ENCODE measurements at regions of chr1 and their contacts with region 1.

Region 1: DNA sequence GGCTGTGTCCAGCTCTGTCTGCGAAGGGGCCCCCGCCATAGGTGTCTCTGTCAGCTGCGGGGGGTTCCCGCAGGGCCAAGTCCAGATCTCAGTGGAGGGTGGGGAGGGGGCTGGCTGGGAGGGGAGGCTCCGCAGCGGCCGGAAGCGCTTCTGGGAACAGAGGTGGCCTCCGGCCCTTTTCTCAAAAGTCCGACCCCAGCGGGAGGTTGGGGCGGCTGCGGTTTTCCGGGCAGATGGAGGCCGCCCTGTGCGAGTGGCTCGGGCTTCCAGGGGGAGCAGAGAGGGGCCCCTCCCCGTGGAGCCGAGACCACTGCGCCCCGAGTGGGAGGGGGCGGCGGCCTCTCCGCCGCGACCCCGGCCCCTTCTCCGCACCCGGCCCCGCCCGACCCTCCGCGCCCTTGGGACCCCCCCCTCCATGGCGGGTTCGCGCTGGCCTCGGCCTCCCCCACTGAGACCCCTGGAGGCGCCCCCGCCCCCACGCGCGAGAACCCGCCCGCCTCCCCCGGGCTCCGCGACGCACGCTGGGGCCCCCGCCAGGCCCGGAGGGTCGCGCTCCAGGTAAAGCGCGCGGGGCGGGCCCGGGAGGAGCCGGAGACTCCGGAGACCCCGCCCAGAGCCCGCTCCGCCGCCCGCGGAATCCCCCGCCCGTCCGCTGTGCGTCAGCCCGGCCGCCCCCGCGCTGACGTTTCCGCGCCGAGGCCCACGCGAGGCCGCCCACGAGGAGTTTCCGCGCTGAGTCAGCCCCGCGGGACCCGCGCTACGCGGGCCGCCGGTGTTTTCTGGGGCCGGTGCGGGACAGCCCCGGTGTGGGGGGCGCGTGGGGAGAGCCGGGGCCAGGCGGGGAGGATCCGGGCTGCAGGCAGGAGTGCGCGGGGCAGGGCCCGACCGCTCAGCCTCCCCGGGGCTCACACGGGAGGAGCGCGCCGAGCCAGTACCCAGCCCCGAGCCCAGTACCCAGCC is 5.3 kb downstream of the TNFRSF18 start:
- DNase-seq: peak; percentile 91
- H3K4me3 Mint-ChIP-seq: peak overlapping the region; percentile 59
- H3K27ac Mint-ChIP-seq: peak overlapping the region; percentile 83
- H3K4me1 Mint-ChIP-seq: peaks cover 12% of the 10 kb centered on the region
- H3K27me3 Mint-ChIP-seq: no peaks in the 10 kb centered on the region

Region 2: GRCh38 chr1:1137256-1138045 is 63.7 kb before region 1 on chr1:
- CTCF ChIA-PET with region 1: no interaction called
- intact Hi-C with region 1: loop called (anchors 2 kb)
- DNase-seq: peak; percentile 82
- H3K4me3 Mint-ChIP-seq: peak overlapping the region; percentile 43
- H3K27ac Mint-ChIP-seq: peak overlapping the region; percentile 75
- H3K4me1 Mint-ChIP-seq: peaks cover 12% of the 10 kb centered on the region
- H3K27me3 Mint-ChIP-seq: no peaks in the 10 kb centered on the region

Region 3: DNA sequence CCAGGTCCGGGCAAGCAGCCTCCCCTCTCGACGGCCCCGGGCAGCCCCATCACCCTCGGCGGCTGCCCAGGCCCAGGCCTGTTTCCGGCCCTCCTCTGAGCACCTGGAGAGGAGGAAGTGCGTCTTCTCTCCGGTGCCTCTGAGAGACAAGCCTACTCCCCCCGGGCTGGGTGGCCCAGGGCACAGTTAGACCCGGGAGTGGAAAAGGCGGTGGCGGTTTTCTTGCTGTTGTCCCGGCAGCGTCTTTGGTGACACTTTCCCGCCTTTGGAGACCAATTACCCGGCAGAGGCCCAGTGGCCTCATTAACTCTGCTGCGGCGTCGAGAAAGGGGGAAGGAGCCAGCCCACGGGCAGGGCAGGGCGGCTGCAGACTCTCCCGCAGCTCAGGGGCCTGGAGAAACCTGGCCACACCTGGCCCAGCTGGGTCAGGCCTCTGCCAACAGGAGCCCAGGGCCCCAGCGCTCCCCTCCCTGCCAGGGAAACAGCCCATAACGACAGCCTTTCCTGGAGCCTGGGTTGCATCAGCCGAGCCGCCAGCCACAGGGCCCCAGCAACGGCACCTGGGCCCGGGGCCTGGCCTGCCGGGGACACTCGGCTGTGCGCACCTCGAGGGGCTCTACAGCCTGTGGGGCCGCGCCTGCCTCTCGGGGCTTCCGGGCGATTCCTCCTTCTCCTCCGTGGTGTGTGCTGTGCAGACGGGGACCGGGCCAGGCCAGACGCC is 56.8 kb before region 1 on chr1:
- CTCF ChIA-PET with region 1: no interaction called
- intact Hi-C with region 1: loop called (anchors 1 kb)
- DNase-seq: peak; percentile 88
- H3K4me3 Mint-ChIP-seq: peak overlapping the region; percentile 62
- H3K27ac Mint-ChIP-seq: peak overlapping the region; percentile 93
- H3K4me1 Mint-ChIP-seq: peaks cover 20% of the 10 kb centered on the region
- H3K27me3 Mint-ChIP-seq: no peaks in the 10 kb centered on the region

Measured in activated naive CD4-positive, alpha-beta T cell treated with anti-CD3 and anti-CD28 coated beads for 36 hours (primary cell).